ENCODE measurements at regions of chr10 and their contacts with region 1.

Region 1: GRCh38 chr10:96025566-96025965 is 17.8 kb upstream of the CCNJ start:
- DNase-seq: peak in 1 of 2 experiments; percentile 52
- H3K4me3 ChIP-seq: no peak overlapping the region
- H3K27ac ChIP-seq: no peak overlapping the region
- H3K4me1 ChIP-seq: no peaks in the 10 kb centered on the region
- H3K27me3 ChIP-seq: no peaks in the 10 kb centered on the region
- CTCF ChIP-seq: peak; percentile 36 to 73 (median 41)
- EP300 ChIP-seq: no peak
- POLR2A ChIP-seq: no peak
- RAD21 ChIP-seq: peak; percentile 24 to 45; a peak in 3 of 4 replicates

Region 2: DNA sequence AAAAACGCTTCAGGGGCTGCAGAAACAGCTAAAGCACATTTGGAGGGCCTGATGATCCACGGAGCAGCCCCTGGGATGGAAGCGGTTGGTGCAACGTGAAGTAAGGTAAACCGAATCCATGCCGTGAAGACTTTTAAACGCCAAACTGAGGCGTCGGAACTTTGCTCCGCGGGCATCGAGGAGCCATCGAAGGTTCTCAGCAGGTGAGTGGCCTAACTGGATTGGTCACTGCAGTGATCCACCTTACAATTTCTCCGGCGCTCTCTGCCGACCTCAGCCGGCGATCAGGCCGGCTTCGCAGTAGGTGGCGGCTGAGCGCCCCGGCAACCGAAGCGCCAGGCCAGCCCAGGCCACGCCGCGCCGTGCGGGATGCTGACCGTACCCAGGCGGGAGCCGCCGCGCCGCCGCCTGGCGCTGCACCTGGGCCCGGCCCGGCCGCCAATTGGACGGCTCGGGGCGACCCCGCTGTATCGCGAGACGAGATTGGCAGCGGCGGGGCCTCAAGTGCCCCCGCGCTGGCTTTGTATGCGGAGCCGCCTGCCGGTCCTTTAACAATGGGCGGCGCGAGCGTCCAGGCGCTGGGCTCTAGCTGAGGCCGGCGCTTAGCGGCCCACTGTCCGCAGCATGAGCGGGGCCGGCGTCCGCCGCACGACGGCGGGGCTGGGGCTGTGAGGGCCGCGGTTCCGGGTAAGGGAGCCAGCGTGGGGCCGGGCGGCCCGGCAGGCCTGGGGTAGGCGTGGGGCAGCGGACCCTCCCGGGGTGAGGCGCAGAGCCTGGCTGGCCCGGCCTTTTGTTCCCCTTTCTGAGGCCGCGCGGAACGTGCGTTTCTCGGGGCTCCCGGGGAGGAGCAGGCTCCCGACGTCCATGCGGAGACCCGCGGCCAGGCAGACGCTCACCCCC is 17.7 kb after region 1 on chr10 and contains the start of gene CCNJ:
- CTCF ChIA-PET with region 1: interaction called, 10 read pairs
- POLR2A ChIA-PET with region 1: interaction called, 6 read pairs
- DNase-seq: peak; percentile 62 to 90
- H3K4me3 ChIP-seq: peak within 1 kb of the TSS; percentile 81 to 96 (median 85)
- H3K27ac ChIP-seq: peak within 1 kb of the TSS; percentile 88
- H3K4me1 ChIP-seq: no peaks in the 10 kb centered on the region
- H3K27me3 ChIP-seq: peaks cover 0 to 9% (median 4%) of the 10 kb centered on the region in 4 experiments; a peak in 5 of 7 replicates
- CTCF ChIP-seq: no peak
- EP300 ChIP-seq: no peak
- POLR2A ChIP-seq: peak; percentile 91 to 96
- RAD21 ChIP-seq: no peak
- total RNA-seq, gene CCNJ: 34.2 and 34.7 TPM in 2 replicates

Measured in H1 (cell line).